Activated CD4-positive, alpha-beta T cell treated with anti-CD3 and anti-CD28 coated beads for 36 hours (primary cell): ENCODE measurements at regions of chr6 and their contacts with region 1.

Region 1: DNA sequence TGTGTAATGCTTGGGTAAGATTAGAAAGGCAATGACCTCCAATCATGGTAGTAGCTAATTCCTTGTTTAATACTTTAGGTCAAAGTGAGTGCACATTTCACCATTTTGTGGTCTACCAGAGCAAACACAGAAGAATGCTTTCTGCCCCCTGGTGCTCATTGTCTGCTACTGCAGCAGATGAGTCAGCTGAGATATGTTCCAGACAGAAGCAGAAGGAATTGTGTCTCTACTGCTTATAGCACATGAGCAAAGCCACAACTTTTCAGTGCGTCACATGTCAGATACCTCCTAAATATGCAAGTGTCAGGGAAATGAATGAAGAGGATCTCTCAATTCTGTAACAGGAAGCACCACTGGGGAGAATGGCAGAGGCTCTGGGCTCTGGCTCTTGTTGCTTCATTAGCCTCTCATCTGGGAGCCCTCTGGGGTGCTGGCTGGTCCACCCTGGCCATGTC is 308.9 kb downstream of the ALDH8A1 start:
- DNase-seq: peak; percentile 83
- ATAC-seq: peak; percentile 88
- H3K4me3 Mint-ChIP-seq: no peak overlapping the region
- H3K27ac Mint-ChIP-seq: no peak overlapping the region
- H3K4me1 Mint-ChIP-seq: peaks cover 23% of the 10 kb centered on the region
- H3K27me3 Mint-ChIP-seq: no peaks in the 10 kb centered on the region

Region 2: GRCh38 chr6:134161036-134161435 is 480.0 kb before region 1 on chr6:
- CTCF ChIA-PET with region 1: interaction called, 16 read pairs
- POLR2A ChIA-PET with region 1: no interaction called
- intact Hi-C with region 1: loop called in 1 of 2 experiments (anchors 1 kb)
- DNase-seq: no peak
- ATAC-seq: no peak
- H3K4me3 Mint-ChIP-seq: no peak overlapping the region
- H3K27ac Mint-ChIP-seq: no peak overlapping the region
- H3K4me1 Mint-ChIP-seq: no peaks in the 10 kb centered on the region
- H3K27me3 Mint-ChIP-seq: no peaks in the 10 kb centered on the region

Region 3: GRCh38 chr6:134317471-134318131 is 323.4 kb before region 1 on chr6 and contains the start of gene SGK1:
- CTCF ChIA-PET with region 1: no interaction called
- POLR2A ChIA-PET with region 1: no interaction called
- intact Hi-C with region 1: loop called in 1 of 2 experiments (anchors 10 kb)
- DNase-seq: peak; percentile 44
- ATAC-seq: peak; percentile 73
- H3K4me3 Mint-ChIP-seq: peak within 1 kb of the TSS; percentile 72
- H3K27ac Mint-ChIP-seq: no peak within 1 kb of the TSS
- H3K4me1 Mint-ChIP-seq: peaks cover 19% of the 10 kb centered on the region
- H3K27me3 Mint-ChIP-seq: peaks cover 22% of the 10 kb centered on the region
- total RNA-seq, gene SGK1: 13.1 to 13.5 TPM

Region 4: DNA sequence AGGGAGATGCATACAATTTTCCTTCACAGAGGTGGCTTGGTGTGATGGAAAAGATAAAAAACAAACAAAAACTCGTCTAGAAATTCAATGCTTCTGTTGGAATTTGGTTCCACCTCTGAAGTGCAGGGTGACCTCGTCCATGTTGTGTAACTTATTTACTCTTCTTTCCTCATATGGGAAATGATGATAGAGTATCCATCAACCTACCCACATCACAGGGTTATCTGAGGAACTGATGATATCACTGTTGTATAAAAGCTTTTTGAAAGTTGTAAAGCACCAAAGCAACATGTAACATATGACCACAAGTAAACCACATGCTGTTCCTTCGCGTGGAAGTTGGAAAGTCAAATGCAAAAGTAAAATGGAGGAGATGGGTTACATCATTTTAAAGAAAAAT is 111.1 kb before region 1 on chr6:
- CTCF ChIA-PET with region 1: no interaction called
- POLR2A ChIA-PET with region 1: no interaction called
- intact Hi-C with region 1: loop called in 1 of 2 experiments (anchors 10 kb)
- DNase-seq: no peak
- ATAC-seq: no peak
- H3K4me3 Mint-ChIP-seq: no peak overlapping the region
- H3K27ac Mint-ChIP-seq: no peak overlapping the region
- H3K4me1 Mint-ChIP-seq: peaks cover 24% of the 10 kb centered on the region
- H3K27me3 Mint-ChIP-seq: no peaks in the 10 kb centered on the region

Region 5: GRCh38 chr6:134630508-134631121 is 10.4 kb before region 1 on chr6:
- CTCF ChIA-PET with region 1: interaction called, 10 read pairs
- POLR2A ChIA-PET with region 1: no interaction called
- intact Hi-C with region 1: no loop called
- DNase-seq: no peak
- ATAC-seq: no peak
- H3K4me3 Mint-ChIP-seq: no peak overlapping the region
- H3K27ac Mint-ChIP-seq: no peak overlapping the region
- H3K4me1 Mint-ChIP-seq: peaks cover 13% of the 10 kb centered on the region
- H3K27me3 Mint-ChIP-seq: peaks cover 2% of the 10 kb centered on the region

Region 6: GRCh38 chr6:134882426-134883038 is 241.5 kb after region 1 on chr6:
- CTCF ChIA-PET with region 1: interaction called, 11 read pairs
- POLR2A ChIA-PET with region 1: no interaction called
- intact Hi-C with region 1: loop called in 1 of 2 experiments (anchors 1 kb)
- DNase-seq: peak; percentile 73
- ATAC-seq: no peak
- H3K4me3 Mint-ChIP-seq: no peak overlapping the region
- H3K27ac Mint-ChIP-seq: no peak overlapping the region
- H3K4me1 Mint-ChIP-seq: no peaks in the 10 kb centered on the region
- H3K27me3 Mint-ChIP-seq: peaks cover 6% of the 10 kb centered on the region